Activated CD4-positive, alpha-beta T cell treated with anti-CD3 and anti-CD28 coated beads, Interleukin-2, amount 10 ng/mL, durations not matched to agents 7 days and 5 days (primary cell): ENCODE measurements at regions of chr2 and their contacts with region 1.

Region 1: DNA sequence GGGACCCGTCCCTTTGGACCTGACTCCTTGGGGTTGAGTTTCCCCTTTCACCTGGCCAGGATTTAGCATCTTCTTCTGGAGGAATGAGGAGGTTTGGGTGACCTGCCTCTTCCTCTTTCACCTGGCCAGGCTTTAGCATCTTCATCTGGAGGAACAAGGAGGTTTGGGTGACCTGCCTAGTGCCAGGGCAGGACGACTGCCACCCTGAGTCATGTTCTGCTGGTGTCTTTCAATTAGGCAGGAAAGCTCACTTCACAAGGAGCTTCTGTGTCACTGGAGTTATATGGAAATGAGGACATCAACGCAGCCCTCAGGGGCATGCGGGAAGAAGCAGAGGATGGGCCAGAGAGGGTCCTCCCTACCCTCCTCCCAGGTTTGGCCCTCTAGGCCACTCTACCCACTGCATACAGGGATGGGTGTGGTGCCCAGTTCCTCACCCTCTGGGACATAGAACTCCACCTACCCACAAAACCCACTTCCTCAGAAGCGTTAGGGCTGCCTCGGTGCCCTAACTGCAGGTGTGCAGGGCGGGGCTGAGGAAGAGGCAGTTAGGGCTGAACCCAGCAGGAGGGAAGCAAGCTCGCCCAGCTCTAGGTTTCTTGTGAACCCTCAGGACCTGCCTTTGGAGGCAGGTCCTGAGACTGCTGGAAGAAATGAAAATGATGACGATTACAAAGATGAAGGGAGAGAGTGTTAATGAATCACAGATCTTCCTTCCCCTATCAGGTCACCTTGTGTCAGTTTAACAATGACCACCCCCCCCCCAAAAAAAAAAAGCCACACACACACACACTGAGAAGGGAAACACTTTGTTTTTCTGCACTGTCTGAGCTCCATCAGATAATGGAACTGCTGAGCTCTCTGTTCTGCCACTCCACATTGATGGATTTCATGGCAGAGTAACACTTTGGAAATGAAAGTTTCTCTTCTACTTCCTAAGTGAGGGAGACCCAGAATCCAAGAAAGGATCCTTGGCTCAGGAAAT is 71.0 kb downstream of the ARL4C start:
- DNase-seq: peak; percentile 92
- H3K4me3 Mint-ChIP-seq: peak overlapping the region; percentile 58
- H3K27ac Mint-ChIP-seq: peak overlapping the region; percentile 99
- H3K4me1 Mint-ChIP-seq: peaks cover 98% of the 10 kb centered on the region
- H3K27me3 Mint-ChIP-seq: no peaks in the 10 kb centered on the region

Region 2: GRCh38 chr2:234488913-234489451 is 63.1 kb after region 1 on chr2:
- CTCF ChIA-PET with region 1: interaction called, 4 read pairs
- POLR2A ChIA-PET with region 1: interaction called, 16 read pairs
- DNase-seq: peak; percentile 90
- H3K4me3 Mint-ChIP-seq: peak overlapping the region; percentile 97
- H3K27ac Mint-ChIP-seq: peak overlapping the region; percentile 98
- H3K4me1 Mint-ChIP-seq: peaks cover 71% of the 10 kb centered on the region
- H3K27me3 Mint-ChIP-seq: no peaks in the 10 kb centered on the region